Mammary epithelial cell (primary cell): ENCODE measurements at regions of chr13 and their contacts with region 1.

Region 1: DNA sequence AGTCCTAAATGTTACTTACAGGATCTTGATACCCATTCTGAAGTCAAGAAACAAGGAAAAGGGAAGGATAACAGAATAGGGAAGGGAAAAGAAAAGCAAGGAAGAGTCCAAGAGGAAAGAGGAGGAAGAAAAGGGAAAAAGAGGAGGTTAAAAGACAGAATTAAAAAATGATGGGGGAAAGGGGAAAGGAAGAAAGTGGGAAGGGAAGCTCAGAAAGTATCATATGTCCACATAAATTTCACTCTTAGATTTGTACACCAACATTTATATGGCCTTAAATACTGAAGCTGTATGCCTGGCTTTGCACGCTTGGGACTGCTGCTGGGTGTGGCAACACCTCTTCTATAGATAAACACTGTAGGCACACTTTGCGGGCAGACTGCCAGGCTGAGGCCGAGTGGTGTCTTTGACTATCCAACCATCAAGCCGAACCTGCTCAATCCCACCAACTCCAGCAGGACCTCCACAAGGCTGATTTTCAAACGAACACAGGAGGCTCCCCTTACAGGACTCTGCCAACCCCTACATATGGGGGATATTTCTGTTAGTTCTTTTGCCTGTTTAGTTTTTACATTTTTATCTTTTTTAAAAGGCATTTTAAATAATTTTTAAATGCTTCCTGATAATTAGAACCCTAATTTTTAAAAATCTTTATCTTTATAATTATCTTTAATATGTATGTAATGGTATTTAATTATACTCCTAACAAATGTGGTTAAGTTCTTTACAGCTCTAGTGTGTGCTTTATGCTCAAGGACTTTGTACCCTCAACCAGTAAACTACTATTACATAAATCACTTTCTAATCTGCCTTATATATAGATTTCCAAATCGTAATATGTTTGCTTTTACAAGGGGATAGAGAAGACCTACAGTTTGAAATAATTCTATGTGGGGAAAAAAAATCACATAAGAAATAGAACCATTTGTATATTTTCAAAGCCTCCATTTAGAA is 154.2 kb downstream of the DIAPH3 start:
- DNase-seq: no peak
- H3K4me3 ChIP-seq: no peak overlapping the region
- H3K27ac ChIP-seq: no peak overlapping the region
- H3K4me1 ChIP-seq: peaks cover 15% of the 10 kb centered on the region
- H3K27me3 ChIP-seq: no peaks in the 10 kb centered on the region
- CTCF ChIP-seq: no peak

Region 2: GRCh38 chr13:60163478-60164233 is 154.1 kb after region 1 on chr13 and contains the start of gene DIAPH3:
- CTCF ChIA-PET with region 1: no interaction called
- dilution Hi-C with region 1: no loop called
- in situ Hi-C with region 1: no loop called
- intact Hi-C with region 1: loop called (anchors 10 kb)
- DNase-seq: peak; percentile 94
- H3K4me3 ChIP-seq: peak within 1 kb of the TSS; percentile 72 to 87 (median 82)
- H3K27ac ChIP-seq: peak within 1 kb of the TSS; percentile 92
- H3K4me1 ChIP-seq: peaks cover 11% of the 10 kb centered on the region
- H3K27me3 ChIP-seq: no peaks in the 10 kb centered on the region
- CTCF ChIP-seq: no peak
- total RNA-seq, gene DIAPH3: 8.0 to 25.0 TPM

Region 3: DNA sequence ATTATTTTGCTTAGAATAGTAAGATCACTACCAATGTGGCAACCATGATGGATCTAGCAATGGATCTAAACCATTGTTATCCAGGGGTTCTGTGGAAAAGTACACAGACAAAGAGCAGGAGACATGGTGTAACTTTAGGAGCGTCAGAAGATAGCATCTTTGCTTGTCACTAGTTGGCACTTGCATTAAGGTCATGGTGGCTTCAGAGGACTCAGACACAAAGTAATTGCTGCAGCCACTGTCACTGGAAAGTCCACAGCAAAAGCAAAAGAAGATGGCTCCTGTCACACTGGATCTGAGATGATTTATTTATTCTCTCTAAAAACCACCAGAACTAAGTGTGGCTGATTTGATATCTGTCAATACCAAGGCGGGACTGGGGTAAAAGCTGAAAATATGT is 1499.4 kb after region 1 on chr13:
- CTCF ChIA-PET with region 1: no interaction called
- dilution Hi-C with region 1: no loop called
- in situ Hi-C with region 1: no loop called
- intact Hi-C with region 1: no loop called
- DNase-seq: no peak
- H3K4me3 ChIP-seq: no peak overlapping the region
- H3K27ac ChIP-seq: no peak overlapping the region
- H3K4me1 ChIP-seq: no peaks in the 10 kb centered on the region
- H3K27me3 ChIP-seq: no peaks in the 10 kb centered on the region
- CTCF ChIP-seq: no peak